ENCODE measurements at regions of chr20 and their contacts with region 1.

Region 1: GRCh38 chr20:46213946-46214830 is 94.1 kb downstream of the CDH22 start:
- DNase-seq: no peak
- H3K4me3 ChIP-seq: no peak overlapping the region
- H3K4me3 Mint-ChIP-seq: no peak overlapping the region
- H3K27ac Mint-ChIP-seq: no peak overlapping the region
- H3K4me1 ChIP-seq: peaks cover 9% of the 10 kb centered on the region
- H3K4me1 Mint-ChIP-seq: peaks cover 6% of the 10 kb centered on the region
- H3K27me3 ChIP-seq: no peaks in the 10 kb centered on the region
- H3K27me3 Mint-ChIP-seq: peaks cover 16% of the 10 kb centered on the region
- CTCF ChIP-seq: no peak

Region 2: GRCh38 chr20:46190478-46191167 is 23.6 kb before region 1 on chr20:
- CTCF ChIA-PET with region 1: no interaction called
- POLR2A ChIA-PET with region 1: no interaction called
- intact Hi-C with region 1: loop called (anchors 1 kb)
- DNase-seq: no peak
- H3K4me3 ChIP-seq: no peak overlapping the region
- H3K4me3 Mint-ChIP-seq: no peak overlapping the region
- H3K27ac Mint-ChIP-seq: no peak overlapping the region
- H3K4me1 ChIP-seq: no peaks in the 10 kb centered on the region
- H3K4me1 Mint-ChIP-seq: no peaks in the 10 kb centered on the region
- H3K27me3 ChIP-seq: peaks cover 3% of the 10 kb centered on the region; the same call in 1 of the 2 replicates
- H3K27me3 Mint-ChIP-seq: peaks cover 26% of the 10 kb centered on the region
- CTCF ChIP-seq: no peak

Measured in Caco-2 (cell line).